Common myeloid progenitor, CD34-positive (primary cell): ENCODE measurements at regions of chr17 and their contacts with region 1.

Region 1: GRCh38 chr17:45385331-45385997 is 47.2 kb downstream of the ARHGAP27 start:
- DNase-seq: peak; percentile 80 to 87 (median 80)
- H3K4me3 ChIP-seq: no peak overlapping the region
- H3K27ac ChIP-seq: no peak overlapping the region
- H3K4me1 ChIP-seq: peaks cover 0 to 37% (median 20%) of the 10 kb centered on the region in 4 experiments
- H3K27me3 ChIP-seq: no peaks in the 10 kb centered on the region

Region 2: DNA sequence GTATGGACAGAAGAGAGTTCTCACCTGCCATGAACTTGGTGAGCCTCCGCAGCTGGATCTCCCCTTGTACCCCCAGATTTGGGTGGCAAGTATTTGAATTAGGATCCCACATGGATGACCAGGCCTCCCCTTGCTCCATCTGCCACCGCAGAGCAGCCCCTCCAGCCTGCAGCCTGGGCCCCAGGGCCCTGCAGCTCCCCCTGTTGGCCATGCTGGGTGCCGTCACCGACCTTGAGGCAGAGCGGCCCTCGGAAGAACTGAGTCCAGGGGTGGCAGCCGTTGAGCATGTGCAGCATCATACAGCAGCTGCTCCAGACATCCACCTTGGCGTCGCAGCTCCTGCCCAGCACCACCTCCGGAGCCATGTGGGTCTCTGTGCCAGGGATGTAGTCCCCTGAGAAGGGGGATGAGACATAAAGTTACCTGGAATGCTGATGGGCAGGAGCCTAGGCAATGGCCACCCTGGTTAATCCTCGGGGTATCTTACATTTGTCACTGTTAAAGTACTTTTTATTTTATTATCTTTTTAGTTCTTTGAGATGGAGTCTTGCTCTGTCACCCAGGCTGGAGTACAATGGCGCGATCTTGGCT is 114.5 kb before region 1 on chr17:
- CTCF ChIA-PET with region 1: interaction called, 169 read pairs
- POLR2A ChIA-PET with region 1: no interaction called
- DNase-seq: peak in 2 of 3 donors; percentile 40 to 49
- H3K4me3 ChIP-seq: no peak overlapping the region
- H3K27ac ChIP-seq: no peak overlapping the region
- H3K4me1 ChIP-seq: no peaks in the 10 kb centered on the region
- H3K27me3 ChIP-seq: no peaks in the 10 kb centered on the region

Region 3: DNA sequence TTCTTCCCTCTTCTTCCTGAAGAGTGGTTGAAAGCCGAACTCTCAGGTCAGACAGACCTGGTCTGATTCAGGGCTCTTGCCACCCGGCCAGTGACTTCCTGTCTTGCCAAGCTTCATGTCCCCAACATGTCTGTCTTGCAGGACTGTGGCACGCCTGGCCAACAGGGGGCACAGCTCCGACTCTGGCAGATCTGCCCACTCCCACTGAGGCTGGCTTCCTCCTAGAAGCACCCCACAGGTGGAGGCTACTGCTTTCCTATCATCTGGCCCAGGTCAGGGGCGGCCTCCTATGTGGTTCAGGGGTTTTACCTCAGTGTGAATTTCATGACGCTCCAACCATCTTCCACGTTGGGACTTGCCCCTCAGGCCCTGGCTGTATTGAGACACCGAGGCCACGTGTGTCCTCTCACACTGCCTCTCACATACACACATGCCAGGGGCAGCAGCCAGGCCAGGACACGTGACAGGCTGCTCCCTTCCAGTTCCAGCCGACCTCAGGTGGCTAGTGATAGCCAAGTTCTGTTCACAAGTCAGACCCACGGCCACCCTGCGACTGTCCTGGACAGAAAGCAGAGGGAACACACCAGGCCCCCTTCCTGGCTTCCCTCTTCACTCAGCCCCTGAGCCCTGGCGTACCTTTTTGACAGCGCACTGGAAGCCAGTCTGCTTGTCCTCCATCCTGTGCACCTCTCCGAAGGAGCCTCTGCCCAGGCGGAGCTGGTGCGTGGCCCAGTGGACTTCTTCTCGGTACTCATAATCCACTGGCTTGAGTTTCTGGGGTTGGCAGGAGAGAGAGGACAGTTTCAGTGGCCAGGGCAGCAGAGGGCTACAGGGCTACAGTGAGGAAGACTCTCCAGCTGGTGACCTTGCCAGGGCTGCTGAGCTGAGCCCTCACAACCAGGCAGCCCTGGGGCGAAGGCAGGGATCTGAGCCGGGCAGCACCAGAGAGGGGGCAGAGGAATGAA is 101.0 kb before region 1 on chr17:
- CTCF ChIA-PET with region 1: interaction called, 169 read pairs
- POLR2A ChIA-PET with region 1: no interaction called
- DNase-seq: peak; percentile 31 to 42 (median 38)
- H3K4me3 ChIP-seq: no peak overlapping the region
- H3K27ac ChIP-seq: no peak overlapping the region
- H3K4me1 ChIP-seq: peaks cover 0 to 8% (median 3%) of the 10 kb centered on the region in 4 experiments
- H3K27me3 ChIP-seq: no peaks in the 10 kb centered on the region

Region 4: DNA sequence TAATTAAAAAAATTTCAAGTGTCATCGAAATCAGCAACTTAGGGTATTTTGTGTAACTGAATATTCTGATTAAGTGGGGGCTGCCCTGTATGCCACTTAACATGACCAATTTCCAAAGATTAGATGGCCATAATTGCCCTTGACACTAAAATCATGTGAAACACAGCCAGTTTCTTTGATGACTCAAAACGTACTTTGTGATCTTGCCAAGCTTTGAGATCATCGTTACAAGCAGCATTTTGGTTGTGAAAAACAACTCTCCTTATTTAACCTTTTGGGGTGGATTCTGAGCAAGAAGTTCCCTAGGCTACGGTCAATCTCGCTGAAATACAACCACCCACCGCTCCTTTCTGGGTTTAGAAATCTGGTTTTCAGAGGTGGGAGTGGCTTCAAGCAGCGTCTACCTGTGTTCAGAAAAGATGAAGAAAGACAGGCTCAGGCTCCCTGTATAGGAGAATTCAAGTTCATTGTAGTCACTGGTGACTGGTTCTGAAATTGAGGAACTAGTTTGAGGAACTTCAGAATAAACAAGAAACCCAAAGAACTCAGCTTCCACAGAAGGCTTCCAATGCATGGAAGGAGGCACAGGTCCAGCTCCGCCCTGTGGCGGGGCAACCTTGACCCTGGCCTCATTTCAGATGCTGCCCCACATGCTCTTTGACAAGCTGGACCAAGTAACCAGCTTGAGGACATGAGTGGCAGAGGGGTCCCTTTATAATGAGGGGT is 78.0 kb before region 1 on chr17:
- CTCF ChIA-PET with region 1: interaction called, 20 read pairs
- POLR2A ChIA-PET with region 1: interaction called, 3 read pairs
- DNase-seq: peak; percentile 78 to 93 (median 87)
- H3K4me3 ChIP-seq: peak overlapping the region in 5 of 7 experiments; percentile 23 to 53 (median 38)
- H3K27ac ChIP-seq: peak overlapping the region; percentile 76 to 89
- H3K4me1 ChIP-seq: peaks cover 34 to 66% (median 56%) of the 10 kb centered on the region in 4 experiments
- H3K27me3 ChIP-seq: no peaks in the 10 kb centered on the region

Region 5: DNA sequence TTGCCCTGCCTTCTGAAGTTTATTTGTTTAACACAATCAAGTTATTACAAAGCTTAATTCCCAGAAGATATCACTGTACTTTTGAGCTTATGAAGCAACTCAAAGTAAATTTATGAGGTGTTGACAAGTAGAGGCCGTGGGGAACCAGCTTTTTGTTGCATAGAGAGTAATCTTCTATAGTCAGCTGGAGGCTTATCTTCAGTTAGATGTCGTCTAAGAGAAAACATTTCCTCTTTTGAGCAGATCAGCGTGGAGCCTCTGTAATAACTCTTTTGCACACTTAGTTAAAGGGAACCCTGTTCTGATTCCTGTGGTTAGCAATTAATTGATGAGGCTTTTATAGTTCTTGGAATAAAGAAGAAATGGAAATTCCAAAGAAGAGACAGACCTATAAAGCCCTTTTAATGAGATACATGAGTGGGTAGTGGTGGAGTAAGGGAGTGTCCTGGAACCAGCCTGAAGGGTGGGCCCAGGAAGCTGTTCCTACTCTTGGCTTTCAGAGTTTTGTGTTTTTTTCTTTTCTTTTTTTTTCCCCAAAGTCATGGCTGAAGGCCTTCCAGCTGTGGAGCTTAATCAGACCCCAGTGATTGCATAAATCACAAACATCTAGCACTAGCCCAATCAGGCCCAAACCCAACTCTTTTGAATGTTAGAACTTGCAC is 39.8 kb before region 1 on chr17:
- CTCF ChIA-PET with region 1: interaction called, 12 read pairs
- POLR2A ChIA-PET with region 1: no interaction called
- DNase-seq: peak; percentile 86 to 98 (median 96)
- H3K4me3 ChIP-seq: peak overlapping the region in 1 of 7 experiments; percentile 16
- H3K27ac ChIP-seq: peak overlapping the region in 1 of 2 experiments; percentile 50
- H3K4me1 ChIP-seq: peaks cover 7 to 32% (median 23%) of the 10 kb centered on the region in 4 experiments
- H3K27me3 ChIP-seq: no peaks in the 10 kb centered on the region